K562 (cell line): ENCODE measurements at regions of chr16 and their contacts with region 1.

Region 1: GRCh38 chr16:72715267-72715666 is 332.7 kb downstream of the ZFHX3 start:
- DNase-seq: no peak
- ATAC-seq: no peak
- H3K4me3 ChIP-seq: no peak overlapping the region
- H3K27ac ChIP-seq: no peak overlapping the region
- H3K4me1 ChIP-seq: no peaks in the 10 kb centered on the region
- H3K27me3 ChIP-seq: no peaks in the 10 kb centered on the region
- CTCF ChIP-seq: no peak
- EP300 ChIP-seq: no peak
- POLR2A ChIP-seq: no peak
- RAD21 ChIP-seq: no peak

Region 2: DNA sequence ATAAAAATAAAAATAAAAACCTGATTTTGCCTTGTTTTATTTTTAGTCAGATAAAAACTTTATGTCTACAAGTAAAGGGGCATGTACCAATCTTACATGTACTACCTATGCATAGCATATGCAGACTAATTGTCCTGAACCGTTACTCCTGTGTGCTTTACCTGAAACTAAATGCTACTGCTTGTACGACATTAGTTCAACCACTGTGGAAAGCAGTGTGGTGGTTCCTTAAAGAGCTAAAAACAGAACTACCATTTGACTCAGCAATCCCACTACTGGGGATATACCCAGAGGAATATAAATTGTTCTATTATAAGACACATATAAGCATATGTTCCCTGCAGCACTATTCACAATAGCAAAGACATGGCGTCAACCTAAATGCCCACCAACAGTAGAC is 117.3 kb before region 1 on chr16:
- CTCF ChIA-PET with region 1: no interaction called
- POLR2A ChIA-PET with region 1: no interaction called
- in situ Hi-C with region 1: no loop called
- intact Hi-C with region 1: no loop called
- DNase-seq: no peak
- ATAC-seq: no peak
- H3K4me3 ChIP-seq: no peak overlapping the region
- H3K27ac ChIP-seq: no peak overlapping the region
- H3K4me1 ChIP-seq: no peaks in the 10 kb centered on the region
- H3K27me3 ChIP-seq: no peaks in the 10 kb centered on the region
- CTCF ChIP-seq: no peak
- EP300 ChIP-seq: no peak
- POLR2A ChIP-seq: no peak
- RAD21 ChIP-seq: no peak

Region 3: GRCh38 chr16:72612256-72612655 is 103.0 kb before region 1 on chr16:
- CTCF ChIA-PET with region 1: no interaction called
- POLR2A ChIA-PET with region 1: no interaction called
- in situ Hi-C with region 1: no loop called
- intact Hi-C with region 1: loop called (anchors 10 kb)
- DNase-seq: no peak
- ATAC-seq: no peak
- H3K4me3 ChIP-seq: no peak overlapping the region
- H3K27ac ChIP-seq: no peak overlapping the region
- H3K4me1 ChIP-seq: no peaks in the 10 kb centered on the region; a peak in 1 of 5 replicates
- H3K27me3 ChIP-seq: no peaks in the 10 kb centered on the region
- CTCF ChIP-seq: no peak
- EP300 ChIP-seq: no peak
- POLR2A ChIP-seq: no peak
- RAD21 ChIP-seq: no peak